SK-N-SH (cell line): ENCODE measurements at regions of chr15 and their contacts with region 1.

Region 1: DNA sequence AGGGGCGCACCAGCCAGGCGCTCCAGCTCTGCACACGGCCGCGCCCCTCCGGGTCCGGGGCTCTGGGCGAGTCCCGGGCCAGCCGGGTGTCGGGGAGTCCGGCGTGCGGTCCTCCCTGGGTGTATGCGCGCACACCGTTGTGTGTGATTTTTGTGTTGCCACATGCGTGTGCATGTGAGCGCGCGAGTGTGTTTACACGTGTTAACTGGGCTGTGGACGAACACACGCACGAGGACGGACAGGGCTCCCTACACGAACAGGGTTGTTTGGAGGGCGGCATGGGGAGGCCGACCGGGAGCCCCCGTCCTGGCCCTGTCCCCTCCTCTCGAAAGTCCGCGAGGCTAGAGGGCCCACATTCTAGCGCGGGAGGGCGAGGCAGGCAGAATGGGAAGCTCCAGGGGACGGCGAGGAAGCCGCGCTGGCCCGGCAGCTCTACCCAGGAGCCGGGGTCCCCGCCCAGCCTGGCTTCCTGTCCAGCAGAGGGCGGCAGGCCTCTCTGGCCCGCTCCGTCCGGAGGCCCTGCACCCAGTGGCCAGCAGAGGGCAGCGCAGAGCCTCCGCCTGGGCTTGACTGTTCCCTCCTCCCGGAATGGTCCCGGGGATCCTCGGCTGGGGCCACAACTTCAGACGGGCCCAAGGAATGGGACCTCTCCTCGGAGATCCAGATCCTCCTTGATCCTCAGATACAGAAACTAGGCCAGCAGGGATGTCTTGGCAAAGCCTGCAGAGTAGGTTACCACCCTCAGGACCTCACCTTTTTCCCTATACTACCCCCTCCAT is 611 bp upstream of the LINGO1 start:
- DNase-seq: peak; percentile 97
- H3K4me3 ChIP-seq: peak overlapping the region; percentile 47 to 66
- H3K27ac ChIP-seq: peak overlapping the region in 1 of 2 experiments; percentile 11; a peak in 1 of 4 replicates
- H3K4me1 ChIP-seq: peaks cover 0 to 40% of the 10 kb centered on the region in 2 experiments; a peak in 2 of 4 replicates
- H3K27me3 ChIP-seq: peaks cover 56% of the 10 kb centered on the region
- CTCF ChIP-seq: peak; percentile 98
- EP300 ChIP-seq: no peak
- RAD21 ChIP-seq: peak; percentile 85

Region 2: DNA sequence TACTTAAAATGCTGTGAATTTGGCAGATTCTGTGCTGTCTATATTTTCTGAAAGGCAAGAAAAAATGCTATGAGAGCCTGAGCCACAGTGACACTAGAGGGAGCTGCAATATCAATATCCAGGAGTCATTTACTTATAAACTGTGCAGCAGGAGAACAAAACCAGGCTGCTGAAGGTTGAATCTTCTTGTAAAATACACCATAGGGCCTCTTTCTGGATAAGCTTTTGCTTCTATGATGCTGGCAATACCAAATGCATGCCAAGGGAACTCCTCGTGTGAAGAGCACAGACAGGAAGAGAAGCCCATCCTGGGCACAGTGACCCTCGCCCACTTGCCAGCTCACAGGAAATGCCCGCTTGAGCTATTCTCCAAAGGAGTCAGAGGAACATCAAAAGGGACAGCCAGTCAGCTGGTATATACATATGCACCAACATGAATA is 514.4 kb before region 1 on chr15:
- CTCF ChIA-PET with region 1: interaction called, 11 read pairs
- POLR2A ChIA-PET with region 1: no interaction called
- DNase-seq: peak; percentile 55
- H3K4me3 ChIP-seq: no peak overlapping the region
- H3K27ac ChIP-seq: peak overlapping the region in 1 of 2 experiments; percentile 45; a peak in 3 of 4 replicates
- H3K4me1 ChIP-seq: peaks cover 3 to 5% of the 10 kb centered on the region in 2 experiments
- H3K27me3 ChIP-seq: no peaks in the 10 kb centered on the region
- CTCF ChIP-seq: peak; percentile 86
- EP300 ChIP-seq: no peak
- RAD21 ChIP-seq: peak; percentile 94

Region 3: DNA sequence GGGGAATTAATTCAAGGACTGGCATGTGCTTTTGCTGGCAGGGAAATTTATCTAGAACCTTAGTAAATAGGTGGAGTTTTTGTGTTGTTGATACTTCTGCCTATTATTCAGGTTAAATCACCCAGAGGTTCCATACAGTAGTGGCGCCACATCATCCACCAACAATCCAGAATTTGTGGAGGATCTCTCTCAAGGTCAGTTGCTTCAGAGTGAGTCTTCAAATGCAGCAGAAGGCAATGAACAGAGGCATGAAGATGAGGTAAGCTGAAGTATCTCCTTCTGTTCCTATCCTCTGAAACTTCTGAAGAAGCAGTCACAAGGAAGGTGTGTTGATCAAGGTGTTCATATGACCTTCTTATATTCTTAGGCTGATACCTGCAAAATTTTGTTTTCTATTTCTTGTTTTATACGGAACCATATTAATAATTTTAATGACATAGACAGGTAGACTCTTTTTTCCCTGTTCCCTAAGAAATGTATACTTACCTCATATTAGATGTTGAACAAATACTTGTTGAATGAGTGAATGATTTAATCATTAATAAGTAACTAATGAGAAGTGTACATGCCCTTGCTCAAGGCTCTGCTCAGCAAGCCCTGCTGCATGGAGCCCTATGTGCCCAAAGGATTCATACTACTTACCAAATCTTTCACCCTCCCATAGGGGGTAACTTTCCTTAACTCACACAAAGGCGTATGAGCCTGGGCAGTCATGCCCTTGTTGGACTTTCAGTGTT is 169.0 kb before region 1 on chr15:
- CTCF ChIA-PET with region 1: no interaction called
- POLR2A ChIA-PET with region 1: no interaction called
- DNase-seq: no peak
- H3K4me3 ChIP-seq: no peak overlapping the region
- H3K27ac ChIP-seq: no peak overlapping the region
- H3K4me1 ChIP-seq: peaks cover 0 to 5% of the 10 kb centered on the region in 2 experiments; a peak in 1 of 4 replicates
- H3K27me3 ChIP-seq: no peaks in the 10 kb centered on the region
- CTCF ChIP-seq: no peak
- EP300 ChIP-seq: no peak
- RAD21 ChIP-seq: no peak

Region 4: DNA sequence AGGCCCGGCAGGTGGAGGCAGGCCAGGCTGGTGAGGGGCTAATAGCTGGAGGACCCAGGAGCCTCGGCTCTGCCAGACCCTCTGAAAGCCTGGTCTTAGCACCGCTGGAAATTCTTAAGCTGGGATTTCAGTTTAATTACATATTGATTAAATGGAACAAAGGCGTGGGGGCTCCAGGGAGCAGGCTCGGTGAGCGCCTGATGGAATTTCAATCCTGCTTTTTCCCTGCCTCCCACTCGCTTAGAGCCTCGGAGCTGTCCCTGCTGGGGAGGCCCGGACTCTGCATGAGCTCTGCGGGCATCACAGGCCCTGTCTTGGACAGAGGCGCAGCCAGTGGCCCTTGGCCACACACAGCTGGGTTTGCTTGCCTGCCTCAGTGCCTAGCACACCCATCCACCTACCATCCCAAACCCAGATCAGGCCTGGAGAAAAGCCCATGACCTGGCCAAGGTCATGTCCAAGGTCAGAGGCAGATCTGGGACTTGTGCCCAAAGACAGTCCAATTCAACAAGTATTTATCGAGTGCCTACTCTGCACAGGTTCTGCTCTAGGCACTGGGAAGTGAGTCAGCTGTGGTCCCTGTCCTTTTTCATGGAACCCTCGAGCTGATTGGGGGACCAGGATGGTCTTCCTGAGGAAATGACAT is 41.2 kb before region 1 on chr15:
- CTCF ChIA-PET with region 1: interaction called, 20 read pairs
- POLR2A ChIA-PET with region 1: no interaction called
- DNase-seq: no peak
- H3K4me3 ChIP-seq: no peak overlapping the region
- H3K27ac ChIP-seq: no peak overlapping the region
- H3K4me1 ChIP-seq: peaks cover 0 to 9% of the 10 kb centered on the region in 2 experiments; a peak in 1 of 4 replicates
- H3K27me3 ChIP-seq: no peaks in the 10 kb centered on the region
- CTCF ChIP-seq: no peak
- EP300 ChIP-seq: no peak
- RAD21 ChIP-seq: no peak

Region 5: GRCh38 chr15:77650265-77650664 is 16.9 kb after region 1 on chr15:
- CTCF ChIA-PET with region 1: interaction called, 117 read pairs
- POLR2A ChIA-PET with region 1: no interaction called
- DNase-seq: peak; percentile 70
- H3K4me3 ChIP-seq: no peak overlapping the region
- H3K27ac ChIP-seq: no peak overlapping the region
- H3K4me1 ChIP-seq: peaks cover 0 to 9% of the 10 kb centered on the region in 2 experiments; a peak in 1 of 4 replicates
- H3K27me3 ChIP-seq: peaks cover 32% of the 10 kb centered on the region; the same call in 1 of the 2 replicates
- CTCF ChIP-seq: peak; percentile 45
- EP300 ChIP-seq: no peak
- RAD21 ChIP-seq: peak; percentile 41

Region 6: DNA sequence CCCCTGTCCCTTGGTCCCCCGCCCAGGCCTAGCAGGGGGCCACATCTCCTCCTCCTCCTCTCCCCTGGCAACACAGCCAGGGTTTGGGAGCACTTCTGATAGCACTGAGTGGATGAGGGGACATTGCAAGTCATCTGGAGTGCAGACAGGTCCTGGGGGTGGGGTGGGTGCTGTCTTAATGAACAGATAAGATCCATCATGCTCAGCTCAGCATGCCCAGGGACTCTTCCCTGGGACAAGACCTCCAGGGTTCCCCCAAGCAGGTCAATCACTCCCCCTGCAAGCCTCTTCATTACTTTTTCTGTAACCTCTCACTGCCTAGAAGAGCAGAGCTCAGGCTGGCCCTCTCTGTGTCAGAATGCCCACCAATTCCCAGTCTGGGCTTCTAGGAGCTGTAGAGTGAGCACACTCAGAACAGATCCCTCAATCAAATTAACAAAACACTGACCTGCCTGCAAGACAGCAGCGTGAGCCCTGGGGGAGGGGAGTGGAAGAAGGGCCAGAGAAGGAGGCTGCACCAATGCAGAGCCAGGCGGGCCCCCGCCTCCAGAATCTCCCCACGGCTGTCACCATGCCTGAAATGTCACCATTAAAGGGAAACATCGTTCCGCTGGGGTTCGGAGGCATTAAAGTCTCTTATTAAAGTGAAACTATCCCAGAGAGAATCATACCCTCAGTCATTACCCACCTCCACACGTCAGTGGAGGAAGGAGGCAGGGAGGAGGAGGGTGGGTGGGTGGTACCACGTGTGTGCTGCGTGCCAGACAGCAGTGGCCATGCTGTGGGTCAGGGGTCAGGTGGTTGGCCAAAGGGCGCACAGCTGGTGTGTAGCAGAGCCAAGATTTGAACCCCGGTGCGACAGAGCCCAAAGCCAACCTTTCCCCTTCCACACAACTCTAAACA is 114.1 kb after region 1 on chr15:
- CTCF ChIA-PET with region 1: interaction called, 12 read pairs
- POLR2A ChIA-PET with region 1: no interaction called
- DNase-seq: peak; percentile 78
- H3K4me3 ChIP-seq: no peak overlapping the region
- H3K27ac ChIP-seq: peak overlapping the region in 1 of 2 experiments; percentile 62; a peak in 2 of 4 replicates
- H3K4me1 ChIP-seq: peaks cover 0 to 19% of the 10 kb centered on the region in 2 experiments; a peak in 1 of 4 replicates
- H3K27me3 ChIP-seq: peaks cover 4% of the 10 kb centered on the region; the same call in 1 of the 2 replicates
- CTCF ChIP-seq: no peak
- EP300 ChIP-seq: 0 out of 4 replicates have a peak, but pooled peaks of 1 of the 2 experiments have one; percentile 19
- RAD21 ChIP-seq: no peak

Region 7: DNA sequence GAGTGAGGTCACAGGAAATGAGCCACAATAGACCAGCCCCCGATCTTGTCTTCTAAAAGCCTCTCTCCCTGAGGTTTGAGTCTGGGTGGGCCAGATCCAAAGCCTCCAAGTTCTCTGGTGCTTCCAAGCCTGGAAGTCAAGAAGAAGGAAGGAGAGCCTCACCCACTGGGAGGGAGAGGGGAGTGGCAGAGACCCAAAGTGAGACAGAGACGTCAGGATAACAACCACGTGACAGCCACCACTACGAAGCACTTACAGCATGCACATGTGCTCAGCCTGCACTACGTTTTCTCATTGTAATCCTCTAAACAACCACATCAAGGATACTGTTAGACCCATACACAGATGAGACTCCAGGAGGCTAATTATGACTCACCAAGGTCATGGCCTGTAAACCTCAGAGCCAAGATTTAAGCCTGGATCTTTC is 196.7 kb after region 1 on chr15:
- CTCF ChIA-PET with region 1: interaction called, 458 read pairs
- POLR2A ChIA-PET with region 1: no interaction called
- DNase-seq: no peak
- H3K4me3 ChIP-seq: no peak overlapping the region
- H3K27ac ChIP-seq: no peak overlapping the region
- H3K4me1 ChIP-seq: peaks cover 0 to 8% of the 10 kb centered on the region in 2 experiments; a peak in 1 of 4 replicates
- H3K27me3 ChIP-seq: peaks cover 2% of the 10 kb centered on the region; the same call in 1 of the 2 replicates
- CTCF ChIP-seq: no peak
- EP300 ChIP-seq: no peak
- RAD21 ChIP-seq: no peak

Region 8: DNA sequence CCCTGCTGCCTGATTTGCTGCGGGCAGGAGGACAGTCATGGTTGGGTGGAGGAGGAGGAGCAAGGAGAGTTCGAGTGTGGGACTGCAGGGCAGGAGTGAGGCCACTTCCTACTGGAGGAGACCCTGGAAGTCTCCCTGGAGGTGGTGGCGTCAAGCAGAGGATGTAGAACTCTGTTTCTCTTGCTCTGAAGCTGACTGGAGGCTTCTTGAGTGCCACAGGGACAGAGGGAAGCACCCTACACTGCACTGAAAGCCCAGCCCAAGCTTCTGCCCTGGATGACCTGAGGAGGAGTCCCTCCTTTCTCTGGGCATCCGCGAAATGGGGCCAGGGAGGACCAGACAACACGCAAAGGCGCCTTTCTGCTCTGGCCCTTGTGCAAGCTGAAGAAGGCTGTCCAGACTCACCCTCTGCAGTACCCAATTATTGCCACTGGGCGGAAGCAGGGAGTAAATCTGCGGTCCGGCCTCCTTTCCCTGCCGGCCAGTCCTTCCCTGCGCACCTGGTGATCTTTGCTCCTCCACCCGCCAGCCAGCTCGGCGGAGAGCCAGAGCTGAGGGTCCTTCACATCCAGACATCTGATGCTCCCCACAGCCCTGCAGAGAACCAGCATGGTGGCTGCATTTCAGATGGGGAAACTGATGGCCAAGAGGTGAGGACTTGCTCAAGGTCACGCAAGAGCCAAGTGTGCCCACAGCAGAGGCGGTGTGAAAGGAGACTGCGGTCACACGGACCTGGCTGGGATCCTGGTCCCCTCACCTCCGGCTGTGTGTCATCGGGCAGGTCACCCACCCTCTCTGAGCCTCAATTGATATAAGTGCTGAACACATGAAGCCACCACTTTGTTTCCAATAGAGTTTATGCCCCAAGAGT is 237.1 kb after region 1 on chr15:
- CTCF ChIA-PET with region 1: interaction called, 37 read pairs
- POLR2A ChIA-PET with region 1: no interaction called
- DNase-seq: peak; percentile 81
- H3K4me3 ChIP-seq: peak overlapping the region in 1 of 2 experiments; percentile 17; a peak in 1 of 4 replicates
- H3K27ac ChIP-seq: no peak overlapping the region
- H3K4me1 ChIP-seq: peaks cover 5 to 7% of the 10 kb centered on the region in 2 experiments; a peak in 3 of 4 replicates
- H3K27me3 ChIP-seq: no peaks in the 10 kb centered on the region
- CTCF ChIP-seq: peak; percentile 63
- EP300 ChIP-seq: no peak
- RAD21 ChIP-seq: peak; percentile 65